ENCODE measurements at regions of chr14 and their contacts with region 1.

Region 1: DNA sequence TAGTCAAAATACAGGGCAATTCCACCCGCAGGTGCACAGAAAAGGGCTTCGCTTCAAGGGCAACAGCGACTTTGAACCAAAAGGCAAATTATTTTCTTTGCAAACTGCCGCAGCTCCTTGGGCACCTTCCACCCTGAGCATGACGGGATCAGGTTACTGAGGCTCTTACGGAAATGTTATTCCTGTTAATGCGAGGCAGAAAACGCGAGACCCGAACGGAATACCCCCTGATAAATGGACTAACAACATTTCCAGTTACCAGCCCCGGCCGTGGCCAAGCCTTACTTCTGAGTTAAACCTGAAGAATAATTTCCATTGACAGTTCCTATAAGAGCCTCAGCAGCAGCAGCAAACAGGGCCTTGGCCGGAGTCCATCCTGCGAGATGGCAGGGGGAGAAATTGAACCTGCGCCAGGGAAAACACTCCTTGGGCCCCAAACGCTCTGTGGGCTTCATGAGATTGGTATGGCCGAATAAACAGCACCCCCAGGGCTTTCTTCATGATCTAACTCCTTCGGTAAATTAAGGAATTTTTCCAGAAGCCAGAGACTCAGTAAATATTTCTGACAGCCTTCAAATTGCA is 70.0 kb upstream of the DICER1 start:
- DNase-seq: no peak
- ATAC-seq: no peak
- H3K4me3 ChIP-seq: no peak overlapping the region
- H3K27ac ChIP-seq: no peak overlapping the region
- H3K4me1 ChIP-seq: peaks cover 30% of the 10 kb centered on the region
- H3K27me3 ChIP-seq: no peaks in the 10 kb centered on the region
- CTCF ChIP-seq: no peak
- EP300 ChIP-seq: no peak
- POLR2A ChIP-seq: no peak
- RAD21 ChIP-seq: no peak

Region 2: GRCh38 chr14:95255487-95255886 is 28.1 kb after region 1 on chr14:
- CTCF ChIA-PET with region 1: no interaction called
- POLR2A ChIA-PET with region 1: no interaction called
- in situ Hi-C with region 1: no loop called
- intact Hi-C with region 1: no loop called
- DNase-seq: no peak
- ATAC-seq: no peak
- H3K4me3 ChIP-seq: no peak overlapping the region
- H3K27ac ChIP-seq: no peak overlapping the region
- H3K4me1 ChIP-seq: no peaks in the 10 kb centered on the region; the same call in 1 of the 2 replicates
- H3K27me3 ChIP-seq: no peaks in the 10 kb centered on the region
- CTCF ChIP-seq: no peak
- EP300 ChIP-seq: no peak
- POLR2A ChIP-seq: no peak
- RAD21 ChIP-seq: no peak

Region 3: GRCh38 chr14:95431199-95432143 is 204.1 kb after region 1 on chr14:
- CTCF ChIA-PET with region 1: interaction called, 4 read pairs
- POLR2A ChIA-PET with region 1: no interaction called
- in situ Hi-C with region 1: no loop called
- intact Hi-C with region 1: loop called (anchors 10 kb)
- DNase-seq: no peak
- ATAC-seq: peak; percentile 58
- H3K4me3 ChIP-seq: no peak overlapping the region
- H3K27ac ChIP-seq: no peak overlapping the region
- H3K4me1 ChIP-seq: peaks cover 32% of the 10 kb centered on the region
- H3K27me3 ChIP-seq: no peaks in the 10 kb centered on the region
- CTCF ChIP-seq: peak; percentile 68
- EP300 ChIP-seq: no peak
- POLR2A ChIP-seq: no peak
- RAD21 ChIP-seq: no peak